Activated T-helper 1 cell treated with anti-CD3 and anti-CD28 coated beads, Interleukin-12 subunit alpha, Interleukin-12 subunit beta, Interleukin-2, Interleukin-4 antibody, amounts not matched to agents 30 ng/mL and 10 ng/mL and 1 ng/mL, durations not matched to agents 14 hours and 24 hours and 36 hours (primary cell): ENCODE measurements at regions of chr19 and their contacts with region 1.

Region 1: DNA sequence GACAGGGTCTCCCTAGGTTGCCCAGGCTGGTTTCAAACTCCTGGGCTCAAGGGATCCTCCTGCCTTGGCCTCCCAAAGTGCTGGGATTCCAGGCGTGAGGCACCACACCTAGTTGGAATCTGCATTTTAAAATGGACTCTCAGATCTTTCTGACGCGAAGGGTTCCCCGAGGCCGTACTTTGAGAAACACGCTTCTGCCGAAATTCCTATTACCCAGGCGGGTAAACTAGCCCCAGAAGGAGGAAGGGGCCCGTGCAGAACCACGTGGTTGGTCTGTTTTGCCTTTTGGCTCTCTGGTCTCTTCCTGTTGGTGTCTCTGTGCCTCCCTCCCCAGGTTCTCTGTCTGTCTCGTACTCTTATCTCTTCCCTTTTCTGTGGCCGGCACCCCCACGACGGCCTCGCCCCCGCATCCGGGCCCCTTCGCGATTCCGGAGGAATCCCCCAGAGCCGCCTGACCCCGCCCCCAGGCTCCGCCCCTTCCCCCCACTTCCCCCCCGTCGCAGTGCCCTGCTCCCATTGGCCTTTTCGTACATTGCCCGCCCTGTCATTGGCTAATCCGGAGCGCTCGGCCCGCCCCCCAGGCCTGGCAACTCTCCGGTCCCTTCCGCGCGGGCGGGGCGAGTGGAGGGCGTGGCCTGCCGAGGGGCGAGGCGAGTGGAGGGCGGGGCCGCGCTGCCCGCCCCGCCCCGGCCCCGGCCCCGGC is at the start of gene TNFAIP8L1:
- DNase-seq: peak; percentile 99
- H3K4me3 Mint-ChIP-seq: peak within 1 kb of the TSS; percentile 98
- H3K27ac Mint-ChIP-seq: peak within 1 kb of the TSS; percentile 94
- H3K4me1 Mint-ChIP-seq: peaks cover 32% of the 10 kb centered on the region
- H3K27me3 Mint-ChIP-seq: no peaks in the 10 kb centered on the region
- total RNA-seq, gene TNFAIP8L1: 13.2 and 13.7 TPM in 2 replicates

Region 2: GRCh38 chr19:4328243-4328990 is 310.6 kb before region 1 on chr19:
- intact Hi-C with region 1: loop called (anchors 2 kb)
- DNase-seq: peak; percentile 87
- H3K4me3 Mint-ChIP-seq: peak overlapping the region; percentile 84
- H3K27ac Mint-ChIP-seq: peak overlapping the region; percentile 90
- H3K4me1 Mint-ChIP-seq: peaks cover 15% of the 10 kb centered on the region
- H3K27me3 Mint-ChIP-seq: peaks cover 9% of the 10 kb centered on the region

Region 3: GRCh38 chr19:4534836-4535658 is 103.9 kb before region 1 on chr19 and contains the start of gene PLIN5:
- intact Hi-C with region 1: no loop called
- DNase-seq: no peak
- H3K4me3 Mint-ChIP-seq: no peak within 1 kb of the TSS
- H3K27ac Mint-ChIP-seq: no peak within 1 kb of the TSS
- H3K4me1 Mint-ChIP-seq: peaks cover 13% of the 10 kb centered on the region
- H3K27me3 Mint-ChIP-seq: peaks cover 6% of the 10 kb centered on the region
- total RNA-seq, gene PLIN5: not detected in 2 replicates

Region 4: DNA sequence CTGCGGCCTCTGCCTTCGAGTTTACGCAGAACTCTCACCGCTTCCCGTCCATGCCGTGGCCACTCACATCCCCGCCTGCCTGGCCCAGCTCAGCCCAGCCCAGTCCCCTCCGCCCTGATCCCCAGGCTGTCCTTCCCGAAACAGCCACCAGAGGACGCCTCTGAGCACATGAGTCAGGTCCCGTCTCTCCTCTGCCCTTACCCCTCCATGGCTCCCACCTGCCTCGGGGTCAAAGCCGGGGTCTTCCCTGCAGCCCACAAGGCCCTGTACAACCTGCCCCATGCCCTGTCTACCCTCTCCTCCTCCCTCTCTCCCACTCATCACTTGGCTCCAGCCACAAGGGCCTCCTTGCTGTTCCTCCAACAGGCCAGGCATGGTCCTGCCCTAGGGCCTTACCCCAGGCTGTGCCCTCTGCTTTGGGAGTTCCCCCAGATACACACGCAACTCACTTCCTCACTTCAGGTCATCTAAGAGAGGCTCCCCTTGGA is 71.4 kb before region 1 on chr19:
- intact Hi-C with region 1: loop called (anchors 2 kb)
- DNase-seq: peak; percentile 21
- H3K4me3 Mint-ChIP-seq: no peak overlapping the region
- H3K27ac Mint-ChIP-seq: no peak overlapping the region
- H3K4me1 Mint-ChIP-seq: no peaks in the 10 kb centered on the region
- H3K27me3 Mint-ChIP-seq: peaks cover 5% of the 10 kb centered on the region

Region 5: GRCh38 chr19:4669723-4670480 is 30.9 kb after region 1 on chr19 and contains the start of gene MYDGF:
- intact Hi-C with region 1: loop called (anchors 1 kb)
- DNase-seq: peak; percentile 91
- H3K4me3 Mint-ChIP-seq: peak within 1 kb of the TSS; percentile 91
- H3K27ac Mint-ChIP-seq: peak within 1 kb of the TSS; percentile 77
- H3K4me1 Mint-ChIP-seq: peaks cover 5% of the 10 kb centered on the region
- H3K27me3 Mint-ChIP-seq: no peaks in the 10 kb centered on the region
- total RNA-seq, gene MYDGF: 97.1 and 98.0 TPM in 2 replicates